Naive thymus-derived CD4-positive, alpha-beta T cell (primary cell): ENCODE measurements at regions of chr14 and their contacts with region 1.

Region 1: GRCh38 chr14:75660630-75661494 is at the starts of genes ERG28 and TTLL5:
- DNase-seq: peak; percentile 94 to 98 (median 97)
- ATAC-seq: peak; percentile 95
- H3K4me3 ChIP-seq: peak within 1 kb of the TSS; percentile 86
- H3K4me3 Mint-ChIP-seq: peak within 1 kb of the TSS; percentile 93 to 100 (median 98)
- H3K27ac ChIP-seq: peak within 1 kb of the TSS; percentile 89
- H3K27ac Mint-ChIP-seq: peak within 1 kb of the TSS; percentile 94 to 100 (median 97)
- H3K4me1 ChIP-seq: peaks cover 0 to 6% of the 10 kb centered on the region in 2 donors
- H3K4me1 Mint-ChIP-seq: peaks cover 11 to 48% (median 39%) of the 10 kb centered on the region in 7 donors
- H3K27me3 ChIP-seq: no peaks in the 10 kb centered on the region
- H3K27me3 Mint-ChIP-seq: peaks cover 0 to 6% (median 0%) of the 10 kb centered on the region in 5 donors
- total RNA-seq, gene ERG28: 7.6 to 17.0 (median 12.4) TPM
- total RNA-seq, gene TTLL5: 21.0 to 31.4 (median 21.6) TPM

Region 2: GRCh38 chr14:74612350-74613021 is 1048.4 kb before region 1 on chr14:
- CTCF ChIA-PET with region 1: no interaction called
- POLR2A ChIA-PET with region 1: no interaction called
- intact Hi-C with region 1: loop called in 1 of 2 experiments (anchors 5 kb)
- DNase-seq: peak; percentile 70 to 97 (median 87)
- ATAC-seq: peak; percentile 95
- H3K4me3 ChIP-seq: peak overlapping the region; percentile 72
- H3K4me3 Mint-ChIP-seq: peak overlapping the region; percentile 60 to 84 (median 78)
- H3K27ac ChIP-seq: peak overlapping the region; percentile 17
- H3K27ac Mint-ChIP-seq: peak overlapping the region in 1 of 9 donors; percentile 46
- H3K4me1 ChIP-seq: peaks cover 5 to 10% of the 10 kb centered on the region in 2 donors
- H3K4me1 Mint-ChIP-seq: peaks cover 23 to 46% (median 39%) of the 10 kb centered on the region in 7 donors
- H3K27me3 ChIP-seq: no peaks in the 10 kb centered on the region
- H3K27me3 Mint-ChIP-seq: peaks cover 0 to 55% (median 6%) of the 10 kb centered on the region in 5 donors

Region 3: GRCh38 chr14:75126679-75127473 is 534.0 kb before region 1 on chr14 and contains the start of gene NEK9:
- CTCF ChIA-PET with region 1: no interaction called
- POLR2A ChIA-PET with region 1: interaction called, 4 read pairs
- intact Hi-C with region 1: loop called (anchors 2 kb)
- DNase-seq: peak; percentile 78 to 91 (median 87)
- ATAC-seq: peak; percentile 92
- H3K4me3 ChIP-seq: peak within 1 kb of the TSS; percentile 87
- H3K4me3 Mint-ChIP-seq: peak within 1 kb of the TSS; percentile 87 to 99 (median 96)
- H3K27ac ChIP-seq: peak within 1 kb of the TSS; percentile 89
- H3K27ac Mint-ChIP-seq: peak within 1 kb of the TSS; percentile 95 to 98 (median 98)
- H3K4me1 ChIP-seq: peaks cover 22 to 29% of the 10 kb centered on the region in 2 donors
- H3K4me1 Mint-ChIP-seq: peaks cover 36 to 48% (median 44%) of the 10 kb centered on the region in 7 donors
- H3K27me3 ChIP-seq: no peaks in the 10 kb centered on the region
- H3K27me3 Mint-ChIP-seq: no peaks in the 10 kb centered on the region
- total RNA-seq, gene NEK9: 81.7 to 141 (median 84.7) TPM

Region 4: DNA sequence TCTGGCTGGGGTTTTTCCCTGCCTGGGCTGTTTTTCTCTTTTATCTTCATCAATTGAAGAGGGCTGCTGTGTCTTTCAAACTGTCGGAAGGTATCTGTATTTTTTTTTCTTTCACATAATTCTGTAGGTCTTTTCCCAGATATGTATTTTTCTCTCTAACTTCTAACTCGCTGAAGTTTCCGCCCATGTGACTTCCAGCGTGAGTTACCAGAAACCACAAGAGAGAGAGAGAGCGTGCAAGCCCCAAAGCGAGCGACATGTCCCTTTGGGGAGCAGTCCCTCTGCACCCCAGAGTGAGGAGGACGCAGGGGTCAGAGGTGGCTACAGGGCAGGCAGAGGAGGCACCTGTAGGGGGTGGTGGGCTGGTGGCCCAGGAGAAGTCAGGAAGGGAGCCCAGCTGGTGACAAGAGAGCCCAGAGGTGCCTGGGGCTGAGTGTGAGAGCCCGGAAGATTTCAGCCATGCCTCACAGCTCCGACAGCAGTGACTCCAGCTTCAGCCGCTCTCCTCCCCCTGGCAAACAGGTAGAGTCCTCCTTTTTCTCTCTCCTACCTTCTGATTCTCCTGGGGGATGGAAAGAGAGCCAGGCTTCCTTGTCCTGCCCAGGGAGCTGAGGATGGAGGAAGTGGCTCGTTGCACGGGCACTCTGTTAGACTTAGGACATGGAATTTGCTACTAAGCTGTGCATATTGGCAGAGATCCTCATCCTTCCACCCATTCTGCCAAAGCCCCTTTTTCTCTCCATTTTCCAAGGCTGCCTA is 138.5 kb before region 1 on chr14 and contains the start of gene BATF:
- CTCF ChIA-PET with region 1: interaction called, 5 read pairs
- POLR2A ChIA-PET with region 1: no interaction called
- intact Hi-C with region 1: loop called in 1 of 2 experiments (anchors 2 kb)
- DNase-seq: peak; percentile 47 to 83 (median 76)
- ATAC-seq: peak; percentile 89
- H3K4me3 ChIP-seq: peak within 1 kb of the TSS; percentile 84
- H3K4me3 Mint-ChIP-seq: peak within 1 kb of the TSS; percentile 92 to 100 (median 98)
- H3K27ac ChIP-seq: peak within 1 kb of the TSS; percentile 82
- H3K27ac Mint-ChIP-seq: peak within 1 kb of the TSS; percentile 91 to 99 (median 95)
- H3K4me1 ChIP-seq: peaks cover 44 to 49% of the 10 kb centered on the region in 2 donors
- H3K4me1 Mint-ChIP-seq: peaks cover 51 to 80% (median 75%) of the 10 kb centered on the region in 7 donors
- H3K27me3 ChIP-seq: no peaks in the 10 kb centered on the region
- H3K27me3 Mint-ChIP-seq: no peaks in the 10 kb centered on the region
- total RNA-seq, gene BATF: 6.8 to 70.0 (median 10.6) TPM

Region 5: GRCh38 chr14:75884198-75884611 is 223.3 kb after region 1 on chr14:
- CTCF ChIA-PET with region 1: no interaction called
- POLR2A ChIA-PET with region 1: no interaction called
- intact Hi-C with region 1: no loop called
- DNase-seq: no peak
- ATAC-seq: no peak
- H3K4me3 ChIP-seq: no peak overlapping the region
- H3K4me3 Mint-ChIP-seq: no peak overlapping the region
- H3K27ac ChIP-seq: no peak overlapping the region
- H3K27ac Mint-ChIP-seq: no peak overlapping the region
- H3K4me1 ChIP-seq: no peaks in the 10 kb centered on the region
- H3K4me1 Mint-ChIP-seq: peaks cover 0 to 4% (median 0%) of the 10 kb centered on the region in 7 donors
- H3K27me3 ChIP-seq: no peaks in the 10 kb centered on the region
- H3K27me3 Mint-ChIP-seq: no peaks in the 10 kb centered on the region

Region 6: DNA sequence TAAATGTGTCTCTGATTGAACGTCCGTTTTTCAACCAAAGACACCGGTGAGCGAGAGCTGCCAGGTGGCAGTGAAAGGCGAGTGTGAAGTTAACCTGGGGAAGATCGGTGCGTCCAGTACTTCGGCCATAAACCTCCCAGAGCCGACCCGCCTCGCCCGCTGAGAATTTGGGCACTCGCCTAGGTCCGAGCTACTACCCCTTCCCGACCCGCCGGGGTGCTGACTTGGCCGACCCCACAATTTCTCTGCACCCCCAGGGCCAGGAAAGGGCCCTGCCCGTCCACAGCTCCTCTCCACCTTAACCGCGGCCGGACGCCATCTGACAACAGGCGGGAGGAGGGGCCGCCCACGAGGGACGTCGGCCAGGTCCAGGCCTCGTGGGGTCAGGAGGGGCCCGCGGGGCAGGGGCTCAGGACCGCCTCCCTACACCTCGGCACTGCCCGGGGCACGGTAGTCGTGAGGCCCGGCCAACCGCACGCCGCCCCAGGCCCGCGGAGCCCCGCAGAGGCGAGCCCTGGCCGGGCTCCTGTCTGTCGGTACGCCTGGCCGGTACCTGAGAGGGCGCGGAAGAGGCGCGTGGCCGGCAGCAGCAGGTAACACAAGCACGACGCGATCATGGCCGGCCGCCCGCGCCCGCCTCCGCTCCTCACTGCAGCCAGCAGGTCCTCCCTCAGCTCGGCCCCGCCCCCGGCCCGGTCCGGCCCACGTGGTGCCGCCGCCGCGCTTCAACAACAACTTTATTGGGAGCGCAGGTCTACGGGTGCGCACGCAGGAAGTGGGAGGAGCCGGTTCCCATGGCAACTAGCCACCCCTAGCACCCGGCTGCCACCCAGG is 1151.6 kb after region 1 on chr14 and contains the start of gene ANGEL1:
- CTCF ChIA-PET with region 1: no interaction called
- POLR2A ChIA-PET with region 1: no interaction called
- intact Hi-C with region 1: loop called in 1 of 2 experiments (anchors 2 kb)
- DNase-seq: peak; percentile 93 to 98 (median 96)
- ATAC-seq: peak; percentile 98
- H3K4me3 ChIP-seq: peak within 1 kb of the TSS; percentile 63
- H3K4me3 Mint-ChIP-seq: peak within 1 kb of the TSS; percentile 88 to 99 (median 93)
- H3K27ac ChIP-seq: peak within 1 kb of the TSS; percentile 87
- H3K27ac Mint-ChIP-seq: peak within 1 kb of the TSS; percentile 85 to 96 (median 94)
- H3K4me1 ChIP-seq: peaks cover 20 to 21% of the 10 kb centered on the region in 2 donors
- H3K4me1 Mint-ChIP-seq: peaks cover 16 to 48% (median 37%) of the 10 kb centered on the region in 7 donors
- H3K27me3 ChIP-seq: no peaks in the 10 kb centered on the region
- H3K27me3 Mint-ChIP-seq: no peaks in the 10 kb centered on the region
- total RNA-seq, gene ANGEL1: 14.5 to 37.6 (median 19.9) TPM

Region 7: DNA sequence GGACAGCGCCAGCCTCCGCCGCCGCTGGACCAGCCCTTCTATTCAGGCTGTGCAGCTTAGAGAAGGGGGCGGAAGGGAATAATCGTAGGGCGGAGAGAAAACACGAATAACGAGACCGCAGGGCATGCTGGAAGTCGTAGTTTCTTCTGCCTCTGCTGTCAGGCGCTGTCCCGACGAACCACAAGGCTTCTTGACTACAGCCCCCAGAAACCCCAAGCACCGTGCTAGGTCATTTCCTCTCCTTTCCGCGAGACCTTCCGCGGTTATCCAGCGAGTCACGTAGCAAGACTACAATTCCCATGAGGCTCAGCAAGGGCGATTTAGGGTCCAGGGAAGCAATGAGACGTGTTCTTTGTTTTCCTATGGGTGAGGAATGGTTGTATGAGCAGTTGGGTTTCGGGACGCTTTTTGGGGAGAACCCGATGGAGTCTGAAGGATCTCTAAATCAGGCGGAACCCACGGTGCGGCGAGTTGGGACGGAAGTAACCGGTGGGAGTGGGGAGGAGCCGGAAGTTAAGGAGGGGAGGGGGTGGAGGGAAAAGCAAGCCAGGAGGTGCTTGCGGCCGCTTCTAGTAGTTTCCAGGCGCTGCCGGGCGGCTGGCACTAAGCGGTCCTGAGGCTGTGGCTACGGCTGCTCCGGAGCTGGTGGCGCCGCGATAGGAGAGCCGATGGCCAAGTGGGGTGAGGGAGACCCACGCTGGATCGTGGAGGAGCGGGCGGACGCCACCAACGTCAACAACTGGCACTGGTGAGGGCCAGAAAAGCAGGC is 1796.8 kb after region 1 on chr14 and contains the starts of genes AHSA1 and VIPAS39:
- CTCF ChIA-PET with region 1: no interaction called
- POLR2A ChIA-PET with region 1: no interaction called
- intact Hi-C with region 1: loop called in 1 of 2 experiments (anchors 2 kb)
- DNase-seq: peak; percentile 67 to 98 (median 96)
- ATAC-seq: peak; percentile 98
- H3K4me3 ChIP-seq: peak within 1 kb of the TSS; percentile 100
- H3K4me3 Mint-ChIP-seq: peak within 1 kb of the TSS; percentile 96 to 100 (median 100)
- H3K27ac ChIP-seq: peak within 1 kb of the TSS; percentile 82
- H3K27ac Mint-ChIP-seq: peak within 1 kb of the TSS; percentile 94 to 100 (median 99)
- H3K4me1 ChIP-seq: peaks cover 20 to 26% of the 10 kb centered on the region in 2 donors
- H3K4me1 Mint-ChIP-seq: peaks cover 22 to 67% (median 53%) of the 10 kb centered on the region in 7 donors
- H3K27me3 ChIP-seq: no peaks in the 10 kb centered on the region
- H3K27me3 Mint-ChIP-seq: no peaks in the 10 kb centered on the region
- total RNA-seq, gene AHSA1: 51.6 to 176 (median 103) TPM
- total RNA-seq, gene VIPAS39: 12.1 to 21.2 (median 20.5) TPM